ENCODE measurements at regions of chr22 and their contacts with region 1.

Region 1: GRCh38 chr22:28594797-28595462 is 84.7 kb downstream of the TTC28 start:
- DNase-seq: peak in 7 of 9 donors; percentile 14 to 57 (median 51)
- ATAC-seq: peak; percentile 83
- H3K4me3 ChIP-seq: no peak overlapping the region
- H3K4me3 Mint-ChIP-seq: no peak overlapping the region
- H3K27ac ChIP-seq: no peak overlapping the region
- H3K27ac Mint-ChIP-seq: no peak overlapping the region
- H3K4me1 ChIP-seq: no peaks in the 10 kb centered on the region
- H3K4me1 Mint-ChIP-seq: no peaks in the 10 kb centered on the region
- H3K27me3 ChIP-seq: peaks cover 0 to 4% of the 10 kb centered on the region in 2 donors
- H3K27me3 Mint-ChIP-seq: peaks cover 0 to 41% (median 18%) of the 10 kb centered on the region in 5 donors

Region 2: DNA sequence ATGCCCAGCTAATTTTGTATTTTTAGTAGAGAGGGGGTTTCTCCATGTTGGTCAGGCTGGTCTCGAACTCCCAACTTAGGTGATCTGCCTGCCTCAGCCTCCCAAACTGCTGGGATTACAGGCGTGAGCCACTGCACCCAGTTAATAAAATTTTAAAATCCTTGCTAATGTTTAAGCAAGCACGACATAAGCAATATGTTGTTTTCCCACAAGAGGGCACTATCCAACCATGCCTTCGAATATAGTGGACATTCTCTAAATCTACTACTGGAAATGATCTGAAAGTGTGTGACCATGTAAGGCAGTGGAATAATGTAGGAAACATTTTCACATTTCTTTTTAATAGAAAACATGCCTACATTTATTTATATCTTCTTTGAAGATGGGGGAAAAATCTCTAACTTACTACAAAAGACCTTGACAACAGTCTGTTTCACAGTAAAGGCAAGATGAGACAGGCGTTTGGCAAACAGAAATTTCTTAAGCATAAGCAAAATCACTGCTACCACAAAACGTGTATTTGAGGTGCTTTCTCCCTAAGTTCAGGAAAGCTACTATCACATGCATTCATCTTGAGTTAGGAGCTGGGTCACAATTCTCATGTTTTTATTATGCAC is 714.0 kb before region 1 on chr22:
- CTCF ChIA-PET with region 1: interaction called, 3 read pairs
- POLR2A ChIA-PET with region 1: no interaction called
- intact Hi-C with region 1: loop called in 1 of 2 experiments (anchors 1 kb)
- DNase-seq: peak in 5 of 9 donors; percentile 26 to 38 (median 38)
- ATAC-seq: peak; percentile 76
- H3K4me3 ChIP-seq: no peak overlapping the region
- H3K4me3 Mint-ChIP-seq: no peak overlapping the region
- H3K27ac ChIP-seq: no peak overlapping the region
- H3K27ac Mint-ChIP-seq: peak overlapping the region in 2 of 9 donors; percentile 2 to 11
- H3K4me1 ChIP-seq: peaks cover 0 to 13% of the 10 kb centered on the region in 2 donors
- H3K4me1 Mint-ChIP-seq: peaks cover 2 to 37% (median 24%) of the 10 kb centered on the region in 7 donors
- H3K27me3 ChIP-seq: no peaks in the 10 kb centered on the region
- H3K27me3 Mint-ChIP-seq: no peaks in the 10 kb centered on the region

Region 3: DNA sequence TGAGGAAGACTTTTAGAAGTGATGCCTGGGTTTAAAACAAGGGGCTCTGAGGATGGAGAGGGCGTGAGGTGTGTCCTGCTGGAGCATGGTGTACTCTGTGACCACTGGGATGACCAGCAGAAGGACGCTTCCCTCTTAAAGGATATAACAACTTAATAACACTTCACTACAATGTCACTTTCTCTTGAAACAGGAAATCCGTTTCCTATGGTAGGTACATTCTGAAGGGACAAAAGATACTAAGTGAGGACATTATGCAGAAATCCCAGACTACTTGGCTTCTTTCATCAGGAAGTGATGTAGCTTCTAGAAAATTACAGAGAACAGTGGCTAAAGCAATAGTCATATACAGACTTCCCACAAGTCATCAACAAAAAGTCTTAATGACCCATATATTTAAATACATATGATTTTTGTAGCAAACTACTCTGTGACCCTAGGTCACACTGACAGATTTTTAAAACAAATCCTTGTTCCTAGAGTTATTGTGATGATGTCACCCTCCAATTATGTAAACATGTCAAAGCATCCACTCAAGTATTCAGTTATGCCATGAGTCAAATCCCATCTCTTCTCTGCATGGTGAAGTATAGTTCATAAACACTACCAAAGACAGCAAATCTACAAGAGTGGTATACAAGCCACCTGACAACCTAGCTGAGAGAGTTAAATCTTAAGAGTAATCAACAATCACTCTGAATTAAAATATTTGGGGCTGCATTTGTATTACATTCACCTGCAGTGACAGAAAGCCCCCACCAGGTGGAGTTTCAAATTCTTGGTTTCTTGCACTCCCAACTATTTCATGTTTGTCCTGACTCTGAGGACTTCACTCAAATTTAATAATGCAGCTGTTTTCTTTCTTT is 708.7 kb before region 1 on chr22:
- CTCF ChIA-PET with region 1: interaction called, 3 read pairs
- POLR2A ChIA-PET with region 1: no interaction called
- intact Hi-C with region 1: loop called in 1 of 2 experiments (anchors 1 kb)
- DNase-seq: peak in 7 of 9 donors; percentile 21 to 53 (median 36)
- ATAC-seq: peak; percentile 67
- H3K4me3 ChIP-seq: no peak overlapping the region
- H3K4me3 Mint-ChIP-seq: no peak overlapping the region
- H3K27ac ChIP-seq: no peak overlapping the region
- H3K27ac Mint-ChIP-seq: peak overlapping the region in 2 of 9 donors; percentile 18 to 33
- H3K4me1 ChIP-seq: no peaks in the 10 kb centered on the region
- H3K4me1 Mint-ChIP-seq: peaks cover 0 to 18% (median 6%) of the 10 kb centered on the region in 7 donors
- H3K27me3 ChIP-seq: no peaks in the 10 kb centered on the region
- H3K27me3 Mint-ChIP-seq: no peaks in the 10 kb centered on the region

Region 4: DNA sequence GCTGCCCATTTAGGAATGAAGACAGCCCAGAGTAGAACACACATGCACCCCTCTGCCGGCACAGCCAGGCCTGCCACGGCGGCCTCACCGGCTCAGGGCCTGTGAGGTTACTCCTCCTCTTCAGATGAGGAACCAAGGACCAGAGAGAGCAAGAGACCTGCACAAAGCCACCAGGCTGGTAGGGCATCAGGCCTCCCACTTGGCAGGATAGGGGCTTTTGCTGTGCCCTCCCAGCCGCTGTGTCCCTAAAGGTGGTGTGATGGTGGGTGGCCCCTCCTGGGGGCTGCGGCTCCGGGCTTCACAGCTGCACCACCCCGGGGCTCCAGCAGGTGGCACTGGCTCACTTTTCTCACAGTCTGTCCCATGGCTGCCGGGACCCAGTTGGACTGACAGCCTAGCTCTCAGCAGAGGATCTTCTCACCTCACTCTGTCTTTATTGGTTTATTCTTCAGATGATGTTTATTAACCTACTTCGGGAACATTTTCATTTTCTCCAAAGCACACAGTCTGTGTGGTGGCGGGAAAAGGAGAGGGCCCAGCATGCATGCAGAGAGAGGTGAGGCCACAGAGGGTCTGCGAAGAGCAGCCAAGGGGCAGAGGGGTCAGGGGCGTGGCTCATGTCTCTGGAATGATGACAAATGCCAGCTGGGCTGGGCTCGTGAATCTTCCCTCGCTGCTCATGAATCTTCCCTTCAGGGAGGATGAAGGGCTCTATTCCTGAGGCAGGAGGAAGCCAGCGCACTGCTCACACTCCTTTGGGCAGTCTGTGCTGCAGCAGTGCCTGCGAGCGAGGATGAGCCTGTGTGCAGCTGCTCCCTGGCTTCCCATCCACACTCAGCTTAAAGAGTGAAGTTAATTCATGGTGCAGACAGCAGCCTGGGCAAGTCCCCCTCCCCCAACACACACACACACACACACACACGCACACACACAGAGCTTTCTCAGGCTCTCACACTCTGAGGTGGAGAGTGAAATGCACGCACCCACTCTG is 574.8 kb before region 1 on chr22:
- CTCF ChIA-PET with region 1: interaction called, 27 read pairs
- POLR2A ChIA-PET with region 1: no interaction called
- intact Hi-C with region 1: loop called in 1 of 2 experiments (anchors 1 kb)
- DNase-seq: peak; percentile 27 to 69 (median 61)
- ATAC-seq: peak; percentile 81
- H3K4me3 ChIP-seq: no peak overlapping the region
- H3K4me3 Mint-ChIP-seq: no peak overlapping the region
- H3K27ac ChIP-seq: no peak overlapping the region
- H3K27ac Mint-ChIP-seq: no peak overlapping the region
- H3K4me1 ChIP-seq: no peaks in the 10 kb centered on the region
- H3K4me1 Mint-ChIP-seq: peaks cover 0 to 8% (median 0%) of the 10 kb centered on the region in 7 donors
- H3K27me3 ChIP-seq: no peaks in the 10 kb centered on the region
- H3K27me3 Mint-ChIP-seq: no peaks in the 10 kb centered on the region

Region 5: GRCh38 chr22:28051787-28052356 is 543.1 kb before region 1 on chr22:
- CTCF ChIA-PET with region 1: interaction called, 4 read pairs
- POLR2A ChIA-PET with region 1: no interaction called
- intact Hi-C with region 1: loop called (anchors 1 to 10 kb)
- DNase-seq: peak in 5 of 9 donors; percentile 4 to 19 (median 11)
- ATAC-seq: no peak
- H3K4me3 ChIP-seq: no peak overlapping the region
- H3K4me3 Mint-ChIP-seq: no peak overlapping the region
- H3K27ac ChIP-seq: no peak overlapping the region
- H3K27ac Mint-ChIP-seq: no peak overlapping the region
- H3K4me1 ChIP-seq: no peaks in the 10 kb centered on the region
- H3K4me1 Mint-ChIP-seq: peaks cover 0 to 2% (median 0%) of the 10 kb centered on the region in 7 donors
- H3K27me3 ChIP-seq: no peaks in the 10 kb centered on the region
- H3K27me3 Mint-ChIP-seq: peaks cover 0 to 5% (median 0%) of the 10 kb centered on the region in 5 donors

Region 6: GRCh38 chr22:28247667-28248363 is 347.1 kb before region 1 on chr22:
- CTCF ChIA-PET with region 1: no interaction called
- POLR2A ChIA-PET with region 1: no interaction called
- intact Hi-C with region 1: loop called in 1 of 2 experiments (anchors 1 kb)
- DNase-seq: no peak
- ATAC-seq: no peak
- H3K4me3 ChIP-seq: no peak overlapping the region
- H3K4me3 Mint-ChIP-seq: no peak overlapping the region
- H3K27ac ChIP-seq: no peak overlapping the region
- H3K27ac Mint-ChIP-seq: no peak overlapping the region
- H3K4me1 ChIP-seq: no peaks in the 10 kb centered on the region
- H3K4me1 Mint-ChIP-seq: peaks cover 0 to 2% (median 0%) of the 10 kb centered on the region in 7 donors
- H3K27me3 ChIP-seq: no peaks in the 10 kb centered on the region
- H3K27me3 Mint-ChIP-seq: peaks cover 0 to 10% (median 3%) of the 10 kb centered on the region in 5 donors

Region 7: DNA sequence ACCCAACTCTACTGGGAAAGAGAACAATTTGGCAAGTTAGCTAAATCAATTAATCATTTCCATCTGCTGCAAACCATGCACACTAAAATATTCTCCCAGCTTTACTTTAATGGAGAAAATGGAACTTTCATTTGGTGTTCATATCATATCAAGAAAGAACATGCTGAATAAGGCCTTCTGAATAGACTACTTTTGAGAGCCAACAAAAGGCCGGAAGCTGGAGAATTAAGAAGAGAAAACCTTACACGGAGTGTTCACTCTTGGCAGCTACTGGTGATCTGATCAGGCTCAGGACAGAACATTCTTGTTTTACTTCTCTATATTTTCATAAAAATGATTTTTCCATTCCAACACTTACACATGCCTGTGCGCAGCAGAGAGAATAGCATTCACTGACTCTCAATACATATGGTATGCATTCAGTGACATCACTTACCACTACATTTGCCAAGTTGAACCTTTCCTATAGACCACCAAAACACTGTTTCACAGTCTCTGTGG is 80.6 kb before region 1 on chr22:
- CTCF ChIA-PET with region 1: no interaction called
- POLR2A ChIA-PET with region 1: no interaction called
- intact Hi-C with region 1: no loop called
- DNase-seq: no peak
- ATAC-seq: no peak
- H3K4me3 ChIP-seq: no peak overlapping the region
- H3K4me3 Mint-ChIP-seq: no peak overlapping the region
- H3K27ac ChIP-seq: no peak overlapping the region
- H3K27ac Mint-ChIP-seq: no peak overlapping the region
- H3K4me1 ChIP-seq: no peaks in the 10 kb centered on the region
- H3K4me1 Mint-ChIP-seq: no peaks in the 10 kb centered on the region
- H3K27me3 ChIP-seq: peaks cover 0 to 4% of the 10 kb centered on the region in 2 donors
- H3K27me3 Mint-ChIP-seq: peaks cover 13 to 42% (median 31%) of the 10 kb centered on the region in 5 donors

Measured in naive thymus-derived CD4-positive, alpha-beta T cell (primary cell).